ENCODE measurements at regions of chr12 and their contacts with region 1.

Region 1: DNA sequence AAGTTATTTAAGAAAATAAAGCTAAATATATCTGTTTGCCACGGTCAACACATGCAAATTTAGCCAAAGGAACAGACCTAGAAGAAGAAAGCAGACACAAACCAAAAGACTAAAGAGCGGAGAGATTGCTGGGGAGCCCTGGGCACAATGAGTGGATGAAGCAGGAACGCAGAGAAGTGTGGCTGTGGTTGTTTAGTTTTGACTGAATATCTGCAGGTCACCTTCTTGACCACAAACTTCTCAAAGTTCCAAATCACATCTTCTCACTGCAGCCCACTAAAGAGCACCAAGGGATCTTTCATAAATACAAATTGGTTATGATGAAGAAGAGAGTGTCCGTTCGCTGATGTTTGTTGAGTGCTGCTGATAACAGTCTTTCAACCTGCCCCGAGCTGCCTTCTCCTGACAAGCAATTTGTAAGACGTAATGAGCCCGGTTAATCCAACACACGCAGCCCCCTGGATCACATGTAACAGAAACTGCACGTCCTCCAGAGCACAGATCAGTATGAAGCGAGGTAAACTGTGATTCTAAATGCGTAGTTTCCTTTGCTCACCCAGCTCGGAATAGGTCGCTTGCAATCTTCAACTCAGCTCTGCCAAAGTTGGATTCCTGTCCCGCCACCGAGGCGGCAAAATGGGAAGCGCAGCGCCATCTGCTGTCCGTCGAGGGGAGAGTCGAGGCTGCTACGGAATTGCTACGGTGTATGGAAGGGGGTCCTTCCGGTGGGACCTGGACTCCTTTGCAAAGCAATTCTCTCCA is 120.8 kb downstream of the GXYLT1 start:
- ATAC-seq: peak; percentile 87 to 100 (median 92)
- H3K4me3 ChIP-seq: no peak overlapping the region
- H3K27ac ChIP-seq: no peak overlapping the region
- H3K4me1 ChIP-seq: peaks cover 3 to 7% of the 10 kb centered on the region in 2 donors

Region 2: GRCh38 chr12:41264281-41264680 is 759.6 kb before region 1 on chr12:
- in situ Hi-C with region 1: loop called in 1 of 9 experiments (anchors 25 kb)
- ATAC-seq: peak in 2 of 8 experiments; percentile 34 to 54
- H3K4me3 ChIP-seq: no peak overlapping the region
- H3K27ac ChIP-seq: no peak overlapping the region
- H3K4me1 ChIP-seq: peaks cover 0 to 3% of the 10 kb centered on the region in 2 donors

Region 3: GRCh38 chr12:41277116-41277945 is 746.6 kb before region 1 on chr12:
- in situ Hi-C with region 1: loop called in 6 of 9 experiments (anchors 10 to 25 kb)
- ATAC-seq: peak; percentile 20 to 65 (median 54)
- H3K4me3 ChIP-seq: no peak overlapping the region
- H3K27ac ChIP-seq: peak overlapping the region in 1 of 2 donors; percentile 33
- H3K4me1 ChIP-seq: peaks cover 12 to 24% of the 10 kb centered on the region in 2 donors

Region 4: DNA sequence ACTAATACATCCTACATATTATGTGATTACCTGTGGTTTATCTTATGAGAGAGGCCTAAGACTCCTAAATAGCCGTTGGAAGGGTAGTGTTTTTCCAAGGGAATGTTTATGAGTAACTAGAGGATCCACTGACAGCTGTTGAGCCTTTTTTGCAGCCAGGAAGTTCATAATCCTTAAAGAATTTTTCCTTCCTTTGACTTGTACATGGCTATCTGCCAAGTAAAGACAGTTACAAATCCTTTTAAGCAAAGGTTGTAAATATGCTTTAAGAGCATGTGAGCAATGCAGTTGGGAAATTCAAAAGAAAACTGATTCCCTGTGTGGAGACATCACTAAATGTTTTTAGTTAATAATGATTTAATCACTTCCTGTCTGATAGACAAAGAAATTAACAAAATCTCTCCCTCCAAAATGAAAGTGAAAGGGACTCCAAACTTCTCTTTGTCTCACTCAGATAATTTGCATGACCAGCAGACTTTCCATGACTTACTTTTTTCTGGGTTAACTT is 502.0 kb before region 1 on chr12:
- in situ Hi-C with region 1: loop called in 1 of 9 experiments (anchors 25 kb)
- ATAC-seq: peak in 5 of 8 experiments; percentile 12 to 85 (median 70)
- H3K4me3 ChIP-seq: no peak overlapping the region
- H3K27ac ChIP-seq: no peak overlapping the region
- H3K4me1 ChIP-seq: peaks cover 3 to 7% of the 10 kb centered on the region in 2 donors